ENCODE measurements at regions of chr3 and their contacts with region 1.

Region 1: DNA sequence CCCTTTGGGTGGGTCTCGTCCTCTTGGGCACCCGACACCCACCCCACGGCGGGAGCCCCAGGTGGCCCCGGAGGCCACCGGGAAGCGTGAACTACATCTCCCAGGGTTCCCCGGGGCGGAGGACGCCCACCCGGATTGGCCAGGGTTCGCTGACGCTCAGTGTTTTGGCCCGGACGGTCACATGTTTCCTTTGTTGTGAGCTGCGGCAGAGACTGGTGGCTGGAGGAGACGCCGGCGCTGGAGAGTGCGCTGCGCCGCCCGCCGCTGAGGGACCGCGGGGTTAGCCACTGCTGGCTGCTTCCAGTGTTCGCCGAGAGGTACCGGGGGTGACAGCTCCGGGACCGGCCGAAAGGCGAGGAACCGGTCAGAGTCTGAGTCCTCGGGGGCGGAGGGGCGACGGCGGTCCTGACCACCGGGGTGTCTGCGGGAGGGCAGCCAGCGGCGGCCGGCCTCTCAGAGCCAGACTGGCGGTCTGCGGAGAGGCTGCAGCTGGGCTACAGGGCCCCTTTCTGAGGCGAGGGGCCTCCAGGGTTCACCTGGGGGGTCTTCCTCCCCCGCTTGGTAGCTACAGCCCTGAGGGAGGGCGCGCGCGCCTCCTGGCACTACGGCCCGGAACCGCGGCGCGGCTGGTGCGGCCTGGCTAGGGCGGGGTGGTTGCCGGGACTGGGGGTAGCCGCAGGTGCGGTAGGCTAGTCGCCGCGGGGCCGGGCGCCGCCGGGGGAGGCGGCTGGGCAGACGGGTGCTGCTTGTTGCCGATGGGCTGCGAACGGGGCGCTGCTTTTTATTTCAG is at the start of gene KLHL24:
- DNase-seq: peak; percentile 87 to 92 (median 88)
- H3K4me3 ChIP-seq: peak within 1 kb of the TSS; percentile 33 to 97
- H3K4me3 Mint-ChIP-seq: peak within 1 kb of the TSS; percentile 93 to 97 (median 94)
- H3K27ac ChIP-seq: peak within 1 kb of the TSS; percentile 86
- H3K27ac Mint-ChIP-seq: peak within 1 kb of the TSS; percentile 93 to 98 (median 97)
- H3K4me1 ChIP-seq: peaks cover 28% of the 10 kb centered on the region
- H3K4me1 Mint-ChIP-seq: peaks cover 10 to 43% (median 29%) of the 10 kb centered on the region in 4 donors
- H3K27me3 ChIP-seq: no peaks in the 10 kb centered on the region
- H3K27me3 Mint-ChIP-seq: no peaks in the 10 kb centered on the region
- total RNA-seq, gene KLHL24: 107 to 108 TPM

Region 2: DNA sequence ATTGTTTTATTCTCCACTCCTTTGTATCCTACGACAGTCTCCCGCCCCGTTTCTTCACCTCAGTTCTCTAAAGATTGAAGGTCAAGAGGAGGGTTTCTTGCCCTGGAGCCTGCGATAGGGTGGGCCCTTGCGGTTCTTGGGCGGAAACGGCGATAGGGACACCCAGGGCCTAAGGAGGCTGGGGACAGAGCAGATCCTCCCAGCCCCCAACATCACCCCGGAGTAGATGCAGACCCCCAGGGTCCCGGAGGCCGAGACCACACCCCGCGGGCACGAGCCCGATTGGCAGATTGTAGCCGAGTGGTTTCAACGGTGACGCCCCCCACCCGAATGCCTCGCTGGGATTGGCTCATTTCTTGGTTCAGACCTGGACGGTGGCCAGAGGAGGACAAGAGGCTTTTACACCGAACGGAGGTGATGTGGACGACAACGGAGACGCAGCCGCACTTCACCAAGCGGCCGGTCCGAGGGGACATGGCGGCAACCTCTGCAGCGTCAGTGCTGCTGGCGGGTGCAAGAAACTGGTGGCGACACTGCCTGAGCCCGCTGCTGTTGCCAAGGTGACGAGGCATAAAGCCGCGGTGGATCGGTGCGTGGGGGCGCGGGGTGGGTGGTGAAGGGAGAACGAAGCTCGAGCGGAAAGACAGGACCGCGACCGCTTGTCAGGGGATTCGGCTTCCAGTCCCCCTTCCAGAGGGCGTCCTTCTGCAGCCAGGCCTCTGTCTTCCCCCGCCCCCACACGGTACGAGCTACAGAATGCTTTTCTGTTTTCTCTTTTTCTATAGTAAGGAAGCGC is 188.2 kb before region 1 on chr3:
- CTCF ChIA-PET with region 1: interaction called, 3 read pairs
- POLR2A ChIA-PET with region 1: interaction called, 8 read pairs
- intact Hi-C with region 1: loop called (anchors 1 kb)
- DNase-seq: peak; percentile 61 to 74 (median 64)
- H3K4me3 ChIP-seq: peak overlapping the region; percentile 33 to 80
- H3K4me3 Mint-ChIP-seq: peak overlapping the region; percentile 90 to 98 (median 96)
- H3K27ac ChIP-seq: peak overlapping the region; percentile 55
- H3K27ac Mint-ChIP-seq: peak overlapping the region; percentile 80 to 94 (median 91)
- H3K4me1 ChIP-seq: peaks cover 20% of the 10 kb centered on the region
- H3K4me1 Mint-ChIP-seq: peaks cover 12 to 31% (median 15%) of the 10 kb centered on the region in 4 donors
- H3K27me3 ChIP-seq: no peaks in the 10 kb centered on the region
- H3K27me3 Mint-ChIP-seq: no peaks in the 10 kb centered on the region

Region 3: DNA sequence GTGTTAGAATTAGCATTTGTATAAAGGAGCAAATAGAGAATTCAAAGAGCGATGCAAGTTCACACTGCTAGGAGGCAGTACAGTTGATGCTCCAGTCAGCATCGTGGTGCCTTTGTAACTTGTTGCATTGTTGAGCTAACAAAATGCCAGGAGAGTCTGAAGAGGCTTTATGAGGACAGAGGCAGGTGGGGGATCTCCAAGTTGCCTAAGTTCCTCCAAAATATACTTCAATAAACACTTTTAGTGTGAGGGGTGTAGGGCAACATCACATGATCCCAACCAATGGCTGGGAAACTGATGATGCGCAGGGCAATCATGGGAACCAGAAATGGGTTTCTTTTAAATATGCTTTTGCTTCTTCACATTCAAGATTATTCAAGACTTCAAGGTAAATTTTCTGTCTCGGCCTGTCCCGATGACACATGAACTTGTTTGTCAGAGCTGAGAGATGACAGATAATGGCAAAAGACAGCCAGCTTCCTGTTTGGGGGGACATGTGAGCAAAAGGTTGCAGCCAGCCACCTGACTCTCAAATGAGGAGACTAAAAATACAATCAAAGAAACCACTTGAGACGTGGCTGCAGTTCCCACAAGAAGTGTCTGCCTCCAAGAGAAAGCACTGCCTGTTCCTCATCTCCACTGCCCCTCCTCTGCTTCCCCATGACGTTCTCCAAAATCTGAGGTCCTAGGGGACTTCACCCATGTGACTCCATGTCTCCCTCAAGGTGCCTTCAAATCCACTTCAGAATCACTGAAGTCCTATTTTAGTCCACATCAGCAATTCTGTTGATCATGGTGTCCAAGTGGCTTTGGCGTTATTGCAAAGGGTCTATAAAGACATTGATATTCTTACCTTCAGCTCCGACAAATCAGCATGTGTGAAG is 119.4 kb before region 1 on chr3:
- CTCF ChIA-PET with region 1: interaction called, 3 read pairs
- POLR2A ChIA-PET with region 1: interaction called, 9 read pairs
- intact Hi-C with region 1: loop called (anchors 1 kb)
- DNase-seq: peak; percentile 64 to 91 (median 68)
- H3K4me3 ChIP-seq: no peak overlapping the region
- H3K4me3 Mint-ChIP-seq: peak overlapping the region; percentile 7 to 70 (median 57)
- H3K27ac ChIP-seq: peak overlapping the region; percentile 42
- H3K27ac Mint-ChIP-seq: peak overlapping the region; percentile 90 to 95 (median 92)
- H3K4me1 ChIP-seq: peaks cover 66% of the 10 kb centered on the region
- H3K4me1 Mint-ChIP-seq: peaks cover 58 to 80% (median 71%) of the 10 kb centered on the region in 4 donors
- H3K27me3 ChIP-seq: no peaks in the 10 kb centered on the region
- H3K27me3 Mint-ChIP-seq: no peaks in the 10 kb centered on the region

Region 4: GRCh38 chr3:183584246-183584913 is 51.2 kb before region 1 on chr3:
- CTCF ChIA-PET with region 1: interaction called, 11 read pairs
- POLR2A ChIA-PET with region 1: interaction called, 28 read pairs
- intact Hi-C with region 1: loop called (anchors 5 kb)
- DNase-seq: no peak
- H3K4me3 ChIP-seq: no peak overlapping the region
- H3K4me3 Mint-ChIP-seq: peak overlapping the region in 1 of 8 donors; percentile 18
- H3K27ac ChIP-seq: no peak overlapping the region
- H3K27ac Mint-ChIP-seq: peak overlapping the region in 5 of 7 donors; percentile 9 to 57 (median 39)
- H3K4me1 ChIP-seq: peaks cover 46% of the 10 kb centered on the region
- H3K4me1 Mint-ChIP-seq: peaks cover 24 to 64% (median 54%) of the 10 kb centered on the region in 4 donors
- H3K27me3 ChIP-seq: no peaks in the 10 kb centered on the region
- H3K27me3 Mint-ChIP-seq: no peaks in the 10 kb centered on the region

Region 5: DNA sequence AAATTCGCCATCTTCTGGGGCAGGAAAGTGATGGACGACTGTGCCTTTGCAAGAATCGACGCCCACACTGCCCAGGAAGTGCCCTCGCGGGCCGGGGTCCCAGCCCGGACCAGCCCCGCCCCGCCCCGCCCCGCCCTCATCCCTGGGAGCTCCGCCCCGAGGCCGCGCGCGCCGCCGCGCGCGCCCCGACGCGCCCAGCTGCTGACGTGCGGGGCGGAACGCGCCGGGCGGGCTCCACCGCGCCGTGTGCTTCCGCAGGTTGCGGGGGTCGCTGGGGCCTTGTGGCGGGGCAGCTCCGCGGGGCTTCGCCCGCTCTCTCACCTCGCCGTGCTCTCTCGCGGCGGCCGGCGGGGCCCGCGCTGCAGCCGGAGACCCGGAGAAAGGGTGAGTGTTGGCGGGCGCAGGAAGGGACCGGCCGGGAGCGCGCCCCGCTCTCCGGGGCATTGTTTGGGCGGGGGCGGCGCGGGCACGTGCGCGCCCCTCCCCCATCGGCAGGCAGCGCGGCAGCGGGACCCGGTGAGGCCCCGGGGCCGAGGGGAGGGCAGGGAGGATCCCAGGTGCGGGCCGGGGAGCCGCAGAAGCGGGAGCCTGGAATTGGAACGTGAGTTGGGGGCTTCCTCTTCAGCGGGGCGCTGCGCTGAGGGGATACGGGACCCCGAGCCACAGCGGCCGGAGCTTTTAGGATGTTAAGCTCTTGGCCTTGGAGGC is 62.1 kb after region 1 on chr3 and contains the start of gene YEATS2:
- CTCF ChIA-PET with region 1: interaction called, 15 read pairs
- POLR2A ChIA-PET with region 1: interaction called, 89 read pairs
- intact Hi-C with region 1: loop called (anchors 1 kb)
- DNase-seq: peak; percentile 65 to 79 (median 74)
- H3K4me3 ChIP-seq: peak within 1 kb of the TSS; percentile 83 to 84
- H3K4me3 Mint-ChIP-seq: peak within 1 kb of the TSS; percentile 87 to 99 (median 98)
- H3K27ac ChIP-seq: peak within 1 kb of the TSS; percentile 78
- H3K27ac Mint-ChIP-seq: peak within 1 kb of the TSS; percentile 79 to 99 (median 97)
- H3K4me1 ChIP-seq: peaks cover 24% of the 10 kb centered on the region
- H3K4me1 Mint-ChIP-seq: peaks cover 28 to 42% (median 36%) of the 10 kb centered on the region in 4 donors
- H3K27me3 ChIP-seq: no peaks in the 10 kb centered on the region
- H3K27me3 Mint-ChIP-seq: no peaks in the 10 kb centered on the region
- total RNA-seq, gene YEATS2: 25.6 to 26.9 TPM

Region 6: GRCh38 chr3:185290266-185290665 is 1654.6 kb after region 1 on chr3:
- CTCF ChIA-PET with region 1: no interaction called
- POLR2A ChIA-PET with region 1: no interaction called
- intact Hi-C with region 1: no loop called
- DNase-seq: no peak
- H3K4me3 ChIP-seq: no peak overlapping the region
- H3K4me3 Mint-ChIP-seq: no peak overlapping the region
- H3K27ac ChIP-seq: no peak overlapping the region
- H3K27ac Mint-ChIP-seq: no peak overlapping the region
- H3K4me1 ChIP-seq: no peaks in the 10 kb centered on the region
- H3K4me1 Mint-ChIP-seq: no peaks in the 10 kb centered on the region
- H3K27me3 ChIP-seq: no peaks in the 10 kb centered on the region
- H3K27me3 Mint-ChIP-seq: no peaks in the 10 kb centered on the region

Measured in CD4-positive, alpha-beta memory T cell (primary cell).